Heart left ventricle (tissue), 16 donors: ENCODE measurements at regions of chr10 and their contacts with region 1.

Region 1: GRCh38 chr10:32413513-32413912 is 32.4 kb upstream of the CCDC7 start:
- DNase-seq: no peak
- ATAC-seq: peak in 1 of 4 donors; percentile 18
- H3K4me3 ChIP-seq: no peak overlapping the region
- H3K27ac ChIP-seq: peak overlapping the region in 3 of 12 donors; percentile 37 to 64 (median 60)
- H3K4me1 ChIP-seq: peaks cover 0 to 39% (median 15%) of the 10 kb centered on the region in 12 donors
- H3K27me3 ChIP-seq: no peaks in the 10 kb centered on the region
- CTCF ChIP-seq: no peak
- POLR2A ChIP-seq: no peak

Region 2: DNA sequence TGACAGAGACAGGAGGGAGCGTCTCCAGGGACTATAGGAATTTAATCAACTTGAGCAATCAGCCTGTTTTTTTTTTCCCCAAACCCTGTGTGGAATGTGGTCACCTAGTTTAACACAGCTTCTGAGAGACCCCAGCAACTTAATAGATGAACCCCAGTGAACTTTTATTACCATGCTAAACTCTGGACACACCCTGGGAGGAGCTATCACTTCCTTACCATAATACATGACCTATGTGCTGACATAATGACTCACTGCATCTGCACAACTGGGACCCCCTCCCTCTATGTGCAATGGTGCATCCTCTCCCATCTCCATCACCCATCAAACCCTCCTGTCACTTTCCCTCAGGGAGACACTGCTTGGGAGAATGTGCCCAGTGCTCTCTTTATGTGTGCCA is 150.2 kb before region 1 on chr10:
- intact Hi-C with region 1: no loop called
- DNase-seq: no peak
- ATAC-seq: no peak
- H3K4me3 ChIP-seq: no peak overlapping the region
- H3K27ac ChIP-seq: no peak overlapping the region
- H3K4me1 ChIP-seq: no peaks in the 10 kb centered on the region
- H3K27me3 ChIP-seq: no peaks in the 10 kb centered on the region
- CTCF ChIP-seq: no peak
- POLR2A ChIP-seq: no peak

Region 3: GRCh38 chr10:32378363-32379317 is 34.9 kb before region 1 on chr10:
- intact Hi-C with region 1: loop called in 1 of 10 experiments (anchors 2 kb)
- DNase-seq: peak; percentile 95 to 97 (median 96)
- ATAC-seq: peak; percentile 99 to 100 (median 99)
- H3K4me3 ChIP-seq: peak overlapping the region; percentile 35 to 78 (median 69)
- H3K27ac ChIP-seq: peak overlapping the region; percentile 43 to 94 (median 82)
- H3K4me1 ChIP-seq: peaks cover 0 to 31% (median 17%) of the 10 kb centered on the region in 12 donors
- H3K27me3 ChIP-seq: no peaks in the 10 kb centered on the region
- CTCF ChIP-seq: no peak
- POLR2A ChIP-seq: peak in 1 of 2 donors; percentile 36

Region 4: GRCh38 chr10:32386623-32387260 is 26.8 kb before region 1 on chr10:
- intact Hi-C with region 1: loop called in 1 of 10 experiments (anchors 1 kb)
- DNase-seq: no peak
- ATAC-seq: no peak
- H3K4me3 ChIP-seq: peak overlapping the region in 1 of 12 donors; percentile 15
- H3K27ac ChIP-seq: no peak overlapping the region
- H3K4me1 ChIP-seq: peaks cover 0 to 12% (median 0%) of the 10 kb centered on the region in 12 donors
- H3K27me3 ChIP-seq: no peaks in the 10 kb centered on the region
- CTCF ChIP-seq: no peak
- POLR2A ChIP-seq: no peak

Region 5: DNA sequence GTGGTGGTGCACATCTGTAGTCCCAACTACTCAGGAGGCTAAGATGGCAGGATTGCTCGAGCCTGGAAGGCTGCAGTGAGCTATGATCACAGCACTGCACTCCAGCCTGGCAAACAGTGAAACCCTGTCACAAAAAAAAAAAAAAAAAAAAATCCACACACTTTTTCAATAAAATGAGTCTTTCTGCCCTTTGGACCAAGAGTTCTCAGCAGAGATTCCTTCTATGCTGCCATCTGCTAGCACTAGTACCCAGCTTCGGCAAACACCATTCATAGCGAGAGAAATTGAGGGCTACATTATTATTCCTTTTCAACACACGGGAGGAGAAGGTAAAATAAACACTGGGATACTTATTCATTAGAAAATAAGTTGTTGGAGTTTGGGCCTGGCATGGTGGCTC is 11.0 kb before region 1 on chr10:
- intact Hi-C with region 1: no loop called
- DNase-seq: no peak
- ATAC-seq: no peak
- H3K4me3 ChIP-seq: no peak overlapping the region
- H3K27ac ChIP-seq: no peak overlapping the region
- H3K4me1 ChIP-seq: no peaks in the 10 kb centered on the region
- H3K27me3 ChIP-seq: no peaks in the 10 kb centered on the region
- CTCF ChIP-seq: no peak
- POLR2A ChIP-seq: no peak

Region 6: GRCh38 chr10:32459051-32459698 is 45.7 kb after region 1 on chr10:
- intact Hi-C with region 1: no loop called
- DNase-seq: no peak
- ATAC-seq: peak in 1 of 4 donors; percentile 18
- H3K4me3 ChIP-seq: no peak overlapping the region
- H3K27ac ChIP-seq: no peak overlapping the region
- H3K4me1 ChIP-seq: no peaks in the 10 kb centered on the region
- H3K27me3 ChIP-seq: no peaks in the 10 kb centered on the region
- CTCF ChIP-seq: no peak
- POLR2A ChIP-seq: no peak